ENCODE measurements at regions of chr16 and their contacts with region 1.

Region 1: GRCh38 chr16:15055141-15056053 is 477 bp downstream of the NTAN1 start:
- DNase-seq: peak; percentile 52
- H3K4me3 ChIP-seq: peak overlapping the region; percentile 78 to 93 (median 87)
- H3K27ac ChIP-seq: peak overlapping the region; percentile 50
- H3K4me1 ChIP-seq: peaks cover 10% of the 10 kb centered on the region
- H3K27me3 ChIP-seq: no peaks in the 10 kb centered on the region
- CTCF ChIP-seq: peak in 1 of 2 donors; percentile 9
- POLR2A ChIP-seq: no peak

Region 2: DNA sequence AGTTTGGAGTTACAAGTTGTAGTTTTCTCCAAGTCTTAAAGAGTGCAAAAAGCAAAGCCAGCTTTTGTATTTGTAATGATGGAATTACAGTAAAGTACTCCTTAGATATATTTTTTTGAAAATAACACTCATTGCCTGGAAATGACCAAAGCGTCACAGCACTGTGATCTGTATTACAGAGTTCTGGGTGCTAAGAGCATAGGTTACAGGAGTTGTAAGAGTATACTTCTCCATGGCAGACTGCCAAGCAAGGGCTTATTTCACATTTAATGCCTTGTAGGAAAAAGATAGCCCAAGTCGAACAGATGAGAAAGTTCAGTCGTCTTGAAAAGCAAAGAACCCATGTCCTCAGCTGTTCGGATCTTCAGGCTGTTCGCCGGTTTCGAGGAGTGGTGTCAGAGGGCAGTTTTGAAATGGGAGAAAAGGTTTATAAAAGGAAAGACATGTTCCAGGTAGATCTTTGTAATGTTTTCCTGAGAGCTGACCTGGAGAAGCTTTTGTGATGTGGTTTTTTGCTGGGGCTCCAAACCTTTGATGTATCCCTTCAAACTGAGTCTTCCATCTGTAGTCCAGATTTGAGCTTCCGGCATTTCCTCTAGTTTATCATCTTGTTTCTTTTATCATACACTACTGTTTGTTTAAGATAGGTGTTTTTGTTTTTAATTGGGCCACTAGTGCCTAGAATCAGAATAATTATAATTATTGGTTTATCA is 1094.1 kb before region 1 on chr16:
- CTCF ChIA-PET with region 1: no interaction called
- POLR2A ChIA-PET with region 1: no interaction called
- dilution Hi-C with region 1: no loop called
- intact Hi-C with region 1: no loop called
- DNase-seq: no peak
- H3K4me3 ChIP-seq: no peak overlapping the region
- H3K27ac ChIP-seq: no peak overlapping the region
- H3K4me1 ChIP-seq: peaks cover 16% of the 10 kb centered on the region
- H3K27me3 ChIP-seq: no peaks in the 10 kb centered on the region
- CTCF ChIP-seq: no peak
- POLR2A ChIP-seq: no peak

Region 3: DNA sequence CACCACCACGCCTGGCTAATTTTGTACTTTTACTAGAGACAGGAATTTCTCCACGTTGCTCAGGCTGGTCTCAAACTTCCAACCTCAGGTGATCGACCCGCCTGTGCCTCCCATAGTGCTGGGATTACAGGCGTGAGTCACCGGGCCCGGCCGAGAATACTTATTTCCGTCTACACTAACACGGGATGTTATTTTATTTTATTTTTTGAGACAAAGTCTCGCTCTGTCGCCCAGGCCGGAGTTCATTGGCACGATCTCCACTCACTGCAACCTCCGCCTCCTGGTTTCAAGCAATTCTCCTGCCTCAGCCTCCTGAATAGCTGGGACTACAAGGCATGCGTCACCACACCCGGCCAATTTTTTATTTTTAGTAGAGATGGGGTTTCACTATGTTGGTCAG is 90.1 kb before region 1 on chr16:
- CTCF ChIA-PET with region 1: no interaction called
- POLR2A ChIA-PET with region 1: no interaction called
- dilution Hi-C with region 1: no loop called
- intact Hi-C with region 1: loop called (anchors 10 kb)
- DNase-seq: no peak
- H3K4me3 ChIP-seq: no peak overlapping the region
- H3K27ac ChIP-seq: no peak overlapping the region
- H3K4me1 ChIP-seq: no peaks in the 10 kb centered on the region
- H3K27me3 ChIP-seq: peaks cover 5 to 9% of the 10 kb centered on the region in 2 experiments
- CTCF ChIP-seq: no peak
- POLR2A ChIP-seq: no peak

Region 4: GRCh38 chr16:15034731-15035591 is 20.4 kb before region 1 on chr16:
- CTCF ChIA-PET with region 1: interaction called, 11 read pairs
- POLR2A ChIA-PET with region 1: interaction called, 3 read pairs
- dilution Hi-C with region 1: no loop called
- intact Hi-C with region 1: no loop called
- DNase-seq: peak; percentile 89
- H3K4me3 ChIP-seq: no peak overlapping the region
- H3K27ac ChIP-seq: peak overlapping the region; percentile 94
- H3K4me1 ChIP-seq: peaks cover 33% of the 10 kb centered on the region
- H3K27me3 ChIP-seq: no peaks in the 10 kb centered on the region
- CTCF ChIP-seq: peak; percentile 59 to 62
- POLR2A ChIP-seq: no peak